Panc1 (cell line): ENCODE measurements at regions of chr6 and their contacts with region 1.

Region 1: GRCh38 chr6:162525181-162525580 is 202.4 kb downstream of the PRKN start:
- DNase-seq: no peak
- ATAC-seq: no peak
- H3K4me3 ChIP-seq: no peak overlapping the region
- H3K27ac ChIP-seq: no peak overlapping the region
- H3K4me1 ChIP-seq: no peaks in the 10 kb centered on the region
- H3K27me3 ChIP-seq: no peaks in the 10 kb centered on the region
- CTCF ChIP-seq: no peak

Region 2: DNA sequence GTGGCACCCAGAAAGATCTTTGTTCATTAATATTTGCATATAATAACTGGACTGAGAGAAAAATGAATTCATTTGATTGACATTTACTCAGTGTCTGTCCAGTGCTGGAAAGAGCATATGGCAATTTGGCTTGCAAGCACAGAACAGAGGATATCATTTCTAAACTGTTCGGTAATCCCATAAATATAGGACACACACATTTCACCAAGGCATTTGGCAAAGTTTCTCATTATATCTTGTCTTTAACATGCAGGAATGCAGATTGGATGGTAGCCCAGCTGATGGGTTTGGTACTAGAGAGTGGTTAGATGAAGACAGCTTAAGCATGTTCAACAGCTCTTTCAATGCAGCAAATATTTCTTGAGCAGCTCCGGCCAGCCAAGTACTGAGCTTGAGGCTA is 56.9 kb before region 1 on chr6:
- CTCF ChIA-PET with region 1: no interaction called
- POLR2A ChIA-PET with region 1: no interaction called
- in situ Hi-C with region 1: no loop called
- intact Hi-C with region 1: loop called (anchors 2 kb)
- DNase-seq: no peak
- ATAC-seq: no peak
- H3K4me3 ChIP-seq: no peak overlapping the region
- H3K27ac ChIP-seq: no peak overlapping the region
- H3K4me1 ChIP-seq: no peaks in the 10 kb centered on the region
- H3K27me3 ChIP-seq: no peaks in the 10 kb centered on the region
- CTCF ChIP-seq: no peak